Spleen (tissue), 13 donors: ENCODE measurements at regions of chr7 and their contacts with region 1.

Region 1: DNA sequence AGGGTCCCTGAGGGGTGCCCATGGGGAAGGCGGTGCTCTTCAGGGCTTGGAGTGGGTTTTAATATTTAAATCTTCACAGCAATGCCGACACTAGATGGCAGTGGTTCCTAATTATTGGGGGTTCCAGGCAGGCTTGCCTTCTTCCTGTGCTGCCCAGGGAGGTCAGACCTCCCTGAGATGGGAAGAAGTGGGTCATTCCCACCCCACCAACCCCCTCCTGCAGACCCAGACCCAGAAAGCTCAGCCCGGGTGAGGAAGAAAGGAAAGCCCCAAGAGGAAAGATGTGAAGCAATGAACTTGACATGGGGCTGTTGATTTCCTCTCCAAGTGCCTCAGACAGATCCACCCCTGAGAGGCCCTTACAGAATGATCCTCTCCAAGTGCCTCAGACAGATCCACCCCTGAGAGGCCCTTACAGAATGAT is 85.1 kb upstream of the LANCL2 start:
- DNase-seq: no peak
- H3K4me3 ChIP-seq: no peak overlapping the region
- H3K27ac ChIP-seq: no peak overlapping the region
- H3K4me1 ChIP-seq: peaks cover 0 to 5% (median 0%) of the 10 kb centered on the region in 6 donors
- H3K27me3 ChIP-seq: peaks cover 0 to 6% (median 0%) of the 10 kb centered on the region in 7 donors
- CTCF ChIP-seq: peak in 10 of 11 experiments; percentile 33 to 61 (median 50)
- POLR2A ChIP-seq: no peak

Region 2: GRCh38 chr7:55237156-55237893 is 42.7 kb before region 1 on chr7:
- intact Hi-C with region 1: no loop called
- DNase-seq: no peak
- H3K4me3 ChIP-seq: no peak overlapping the region
- H3K27ac ChIP-seq: no peak overlapping the region
- H3K4me1 ChIP-seq: no peaks in the 10 kb centered on the region
- H3K27me3 ChIP-seq: peaks cover 0 to 41% (median 0%) of the 10 kb centered on the region in 7 donors
- CTCF ChIP-seq: no peak
- POLR2A ChIP-seq: no peak

Region 3: DNA sequence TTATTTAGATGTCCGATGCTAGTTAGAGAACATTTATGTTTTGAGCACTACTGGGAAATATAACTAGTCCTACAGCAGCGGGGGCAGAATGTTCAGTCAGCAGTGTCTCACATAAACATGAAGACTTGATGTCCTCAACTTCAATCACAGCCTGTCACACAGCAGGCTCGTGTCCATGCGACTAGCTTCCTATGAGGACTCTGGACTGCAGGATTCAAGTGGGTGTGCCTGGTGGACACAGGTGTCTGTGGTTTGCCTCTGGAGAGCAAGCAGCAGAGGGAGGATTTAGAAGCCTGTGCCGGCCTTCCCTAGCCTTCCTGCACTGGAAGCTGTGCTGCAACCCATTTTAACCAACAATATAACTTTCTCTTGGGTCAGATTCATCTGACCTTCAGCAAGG is 55.1 kb after region 1 on chr7:
- intact Hi-C with region 1: no loop called
- DNase-seq: no peak
- H3K4me3 ChIP-seq: no peak overlapping the region
- H3K27ac ChIP-seq: no peak overlapping the region
- H3K4me1 ChIP-seq: no peaks in the 10 kb centered on the region
- H3K27me3 ChIP-seq: no peaks in the 10 kb centered on the region
- CTCF ChIP-seq: no peak
- POLR2A ChIP-seq: no peak

Region 4: GRCh38 chr7:55415173-55415778 is 135.2 kb after region 1 on chr7:
- intact Hi-C with region 1: loop called (anchors 5 kb)
- DNase-seq: peak; percentile 91
- H3K4me3 ChIP-seq: no peak overlapping the region
- H3K27ac ChIP-seq: no peak overlapping the region
- H3K4me1 ChIP-seq: peaks cover 0 to 5% (median 0%) of the 10 kb centered on the region in 6 donors
- H3K27me3 ChIP-seq: no peaks in the 10 kb centered on the region
- CTCF ChIP-seq: peak; percentile 53 to 78 (median 70)
- POLR2A ChIP-seq: no peak

Region 5: GRCh38 chr7:55426676-55427075 is 146.6 kb after region 1 on chr7:
- intact Hi-C with region 1: no loop called
- DNase-seq: no peak
- H3K4me3 ChIP-seq: no peak overlapping the region
- H3K27ac ChIP-seq: no peak overlapping the region
- H3K4me1 ChIP-seq: no peaks in the 10 kb centered on the region
- H3K27me3 ChIP-seq: no peaks in the 10 kb centered on the region
- CTCF ChIP-seq: no peak
- POLR2A ChIP-seq: no peak

Region 6: GRCh38 chr7:55593515-55594318 is 313.7 kb after region 1 on chr7:
- intact Hi-C with region 1: loop called (anchors 10 kb)
- DNase-seq: peak; percentile 91
- H3K4me3 ChIP-seq: no peak overlapping the region
- H3K27ac ChIP-seq: no peak overlapping the region
- H3K4me1 ChIP-seq: peaks cover 0 to 22% (median 11%) of the 10 kb centered on the region in 6 donors
- H3K27me3 ChIP-seq: no peaks in the 10 kb centered on the region
- CTCF ChIP-seq: peak; percentile 48 to 88 (median 72)
- POLR2A ChIP-seq: no peak

Region 7: GRCh38 chr7:55964261-55965099 is 684.4 kb after region 1 on chr7 and contains the start of gene NIPSNAP2:
- intact Hi-C with region 1: loop called (anchors 10 kb)
- DNase-seq: peak; percentile 95
- H3K4me3 ChIP-seq: peak within 1 kb of the TSS; percentile 45 to 91 (median 64)
- H3K27ac ChIP-seq: peak within 1 kb of the TSS; percentile 74 to 97 (median 94)
- H3K4me1 ChIP-seq: peaks cover 10 to 49% (median 28%) of the 10 kb centered on the region in 6 donors
- H3K27me3 ChIP-seq: no peaks in the 10 kb centered on the region
- CTCF ChIP-seq: peak in 7 of 11 experiments; percentile 11 to 69 (median 56)
- POLR2A ChIP-seq: peak in 1 of 3 donors; percentile 58
- total RNA-seq, gene NIPSNAP2: 31.8 to 54.1 (median 37.1) TPM